ENCODE measurements at regions of chr3 and their contacts with region 1.

Region 1: DNA sequence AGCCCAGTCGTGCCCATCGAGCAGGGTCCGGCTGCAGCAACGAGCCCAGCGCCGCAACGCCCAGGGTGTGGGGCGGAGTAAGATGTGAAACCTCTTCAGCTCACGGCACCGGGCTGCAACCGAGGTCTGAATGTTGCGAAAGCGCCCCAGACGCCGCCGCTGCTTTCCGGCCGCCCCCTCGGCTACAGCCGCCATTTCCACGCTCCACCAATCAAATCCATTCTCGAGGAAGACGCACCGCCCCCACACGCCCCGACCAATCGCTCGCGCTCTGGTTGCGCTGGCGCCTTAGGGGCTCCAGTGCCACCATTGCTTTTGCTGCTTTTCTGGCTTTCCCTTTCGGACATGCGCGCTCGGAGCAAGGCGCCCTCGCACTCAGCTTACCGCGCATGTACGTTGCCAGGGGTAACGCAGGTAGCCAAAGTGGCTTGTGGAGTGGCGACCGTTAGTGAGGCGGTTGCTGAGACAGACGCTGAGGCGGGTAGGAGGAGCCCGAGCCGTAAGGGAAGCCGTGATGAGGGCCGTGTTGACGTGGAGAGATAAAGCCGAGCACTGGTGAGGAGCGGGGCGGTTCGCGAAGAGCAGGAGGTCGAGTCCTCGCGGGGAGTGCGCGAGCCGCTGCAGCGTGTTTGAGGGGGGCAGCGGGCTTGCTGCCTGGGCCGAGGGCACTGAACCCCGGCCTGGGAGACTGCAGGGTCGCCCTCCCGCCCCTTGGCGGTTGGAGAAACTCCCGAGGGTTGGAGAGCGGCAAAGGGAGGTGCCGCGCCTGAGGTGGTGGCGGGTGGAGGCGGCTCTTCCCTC is at the starts of genes IFT122 and MBD4:
- DNase-seq: peak; percentile 100
- H3K4me3 Mint-ChIP-seq: peak within 1 kb of the TSS; percentile 92
- H3K27ac Mint-ChIP-seq: peak within 1 kb of the TSS; percentile 99
- H3K4me1 Mint-ChIP-seq: peaks cover 54% of the 10 kb centered on the region
- H3K27me3 Mint-ChIP-seq: no peaks in the 10 kb centered on the region
- total RNA-seq, gene IFT122: 15.7 and 17.6 TPM in 2 replicates
- total RNA-seq, gene MBD4: 41.9 and 45.9 TPM in 2 replicates

Region 2: GRCh38 chr3:129183569-129184395 is 256.2 kb before region 1 on chr3 and contains the start of gene CNBP:
- intact Hi-C with region 1: loop called (anchors 5 kb)
- DNase-seq: peak; percentile 91
- H3K4me3 Mint-ChIP-seq: peak within 1 kb of the TSS; percentile 97
- H3K27ac Mint-ChIP-seq: peak within 1 kb of the TSS; percentile 98
- H3K4me1 Mint-ChIP-seq: peaks cover 42% of the 10 kb centered on the region
- H3K27me3 Mint-ChIP-seq: no peaks in the 10 kb centered on the region
- total RNA-seq, gene CNBP: 351 TPM in 2 replicates

Region 3: DNA sequence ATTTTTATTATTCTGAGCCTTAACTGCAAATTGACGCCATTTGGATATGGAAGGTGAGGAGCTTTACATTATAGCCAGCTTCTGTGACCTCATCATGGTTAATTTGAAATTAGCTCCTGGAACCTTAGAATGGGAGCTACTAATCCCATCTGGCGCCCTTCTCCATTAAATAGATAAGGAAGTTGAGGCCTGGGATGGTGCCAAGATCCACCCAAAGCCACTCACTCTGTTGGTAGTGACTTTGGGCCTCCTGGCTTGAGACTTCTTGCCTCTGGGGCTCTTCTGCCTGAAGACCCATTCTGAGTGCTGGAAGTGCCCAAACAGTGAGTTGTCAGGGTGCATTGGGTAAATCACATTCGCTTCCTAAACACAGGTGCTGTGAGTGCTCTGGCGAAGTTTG is 173.4 kb before region 1 on chr3:
- intact Hi-C with region 1: no loop called
- DNase-seq: no peak
- H3K4me3 Mint-ChIP-seq: no peak overlapping the region
- H3K27ac Mint-ChIP-seq: no peak overlapping the region
- H3K4me1 Mint-ChIP-seq: no peaks in the 10 kb centered on the region
- H3K27me3 Mint-ChIP-seq: no peaks in the 10 kb centered on the region

Region 4: DNA sequence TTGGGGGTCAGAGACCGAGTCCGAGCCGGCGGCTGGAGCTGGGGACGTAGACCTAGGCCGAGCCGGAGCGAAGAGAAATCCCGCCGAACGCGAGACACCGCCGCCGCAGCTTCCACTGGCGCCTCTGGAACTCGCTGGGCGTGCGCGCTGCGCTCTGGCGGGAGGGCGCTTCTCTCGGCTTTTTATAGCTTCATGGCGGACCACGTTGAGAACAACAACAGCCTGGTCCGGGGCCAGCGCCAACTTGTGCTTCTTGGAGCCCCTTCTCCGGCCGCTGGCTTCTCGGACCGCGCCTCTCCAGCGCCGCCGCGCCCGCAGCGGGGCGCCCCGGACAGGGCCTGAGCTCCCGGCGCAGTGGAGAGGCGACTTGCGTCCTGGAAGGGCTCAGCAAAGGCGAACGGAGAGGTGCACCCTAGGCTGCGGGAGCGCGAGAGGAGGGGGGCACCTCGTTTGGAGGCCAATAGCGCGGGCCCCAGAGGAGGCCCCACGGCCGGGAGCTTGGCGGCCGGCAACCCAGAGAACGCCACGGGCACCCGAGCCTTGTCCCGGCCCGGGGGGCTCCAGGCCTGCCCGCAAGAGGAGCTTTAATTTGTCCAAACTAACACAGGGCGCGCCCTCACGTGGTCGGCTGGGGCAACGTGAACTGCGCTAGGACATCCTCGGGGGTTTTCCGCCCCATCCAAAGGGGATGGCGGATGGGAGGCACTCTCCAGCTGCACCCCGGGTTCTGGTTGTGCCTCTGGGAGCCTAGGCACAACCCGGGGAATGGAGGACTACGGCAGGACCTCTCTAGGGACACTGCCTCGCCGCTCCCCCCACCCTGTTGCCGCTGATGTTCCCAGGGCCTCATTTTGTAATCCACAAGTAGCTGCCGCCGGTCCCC is 123.6 kb before region 1 on chr3:
- intact Hi-C with region 1: loop called (anchors 1 kb)
- DNase-seq: peak; percentile 89
- H3K4me3 Mint-ChIP-seq: peak overlapping the region; percentile 71
- H3K27ac Mint-ChIP-seq: peak overlapping the region; percentile 53
- H3K4me1 Mint-ChIP-seq: peaks cover 16% of the 10 kb centered on the region
- H3K27me3 Mint-ChIP-seq: no peaks in the 10 kb centered on the region

Region 5: DNA sequence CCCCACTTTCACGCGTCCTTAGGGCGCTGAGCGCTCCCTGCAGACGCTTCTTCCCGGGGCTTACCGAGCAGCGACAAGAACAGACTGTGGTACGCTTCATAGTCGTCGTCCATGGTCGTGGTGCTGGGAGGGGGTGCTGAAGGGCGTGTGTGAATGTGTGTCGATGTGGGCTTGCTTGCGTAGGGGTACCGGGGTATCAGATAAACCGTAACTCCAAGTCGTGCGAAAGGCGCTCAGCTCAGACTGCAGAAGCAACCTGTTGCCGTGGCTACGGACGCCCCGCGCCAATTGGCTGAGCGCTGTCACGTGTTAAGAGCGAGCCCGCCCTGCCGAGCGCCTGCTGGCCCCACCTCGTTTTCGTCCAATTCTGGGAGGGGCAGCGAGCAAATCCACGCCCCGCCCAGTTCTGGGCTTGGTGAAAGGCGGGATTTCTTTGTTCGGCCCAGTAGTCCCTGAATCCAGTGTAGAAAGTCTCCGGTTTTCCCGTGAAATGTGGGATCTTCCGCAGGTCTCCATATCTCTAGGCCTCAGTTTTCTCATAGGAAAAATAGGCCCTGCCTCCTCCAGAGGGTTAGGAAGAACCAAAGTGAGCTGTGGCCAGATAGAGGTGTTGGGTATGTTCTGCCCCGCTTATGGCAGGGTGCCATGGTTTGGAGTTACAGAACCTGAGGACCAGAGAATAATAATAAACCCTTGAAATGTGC is 11.5 kb before region 1 on chr3 and contains the start of gene EFCAB12:
- intact Hi-C with region 1: loop called (anchors 1 kb)
- DNase-seq: peak; percentile 87
- H3K4me3 Mint-ChIP-seq: peak within 1 kb of the TSS; percentile 62
- H3K27ac Mint-ChIP-seq: peak within 1 kb of the TSS; percentile 64
- H3K4me1 Mint-ChIP-seq: peaks cover 24% of the 10 kb centered on the region
- H3K27me3 Mint-ChIP-seq: peaks cover 8% of the 10 kb centered on the region
- total RNA-seq, gene EFCAB12: 0.25 and 0.48 TPM in 2 replicates

Region 6: DNA sequence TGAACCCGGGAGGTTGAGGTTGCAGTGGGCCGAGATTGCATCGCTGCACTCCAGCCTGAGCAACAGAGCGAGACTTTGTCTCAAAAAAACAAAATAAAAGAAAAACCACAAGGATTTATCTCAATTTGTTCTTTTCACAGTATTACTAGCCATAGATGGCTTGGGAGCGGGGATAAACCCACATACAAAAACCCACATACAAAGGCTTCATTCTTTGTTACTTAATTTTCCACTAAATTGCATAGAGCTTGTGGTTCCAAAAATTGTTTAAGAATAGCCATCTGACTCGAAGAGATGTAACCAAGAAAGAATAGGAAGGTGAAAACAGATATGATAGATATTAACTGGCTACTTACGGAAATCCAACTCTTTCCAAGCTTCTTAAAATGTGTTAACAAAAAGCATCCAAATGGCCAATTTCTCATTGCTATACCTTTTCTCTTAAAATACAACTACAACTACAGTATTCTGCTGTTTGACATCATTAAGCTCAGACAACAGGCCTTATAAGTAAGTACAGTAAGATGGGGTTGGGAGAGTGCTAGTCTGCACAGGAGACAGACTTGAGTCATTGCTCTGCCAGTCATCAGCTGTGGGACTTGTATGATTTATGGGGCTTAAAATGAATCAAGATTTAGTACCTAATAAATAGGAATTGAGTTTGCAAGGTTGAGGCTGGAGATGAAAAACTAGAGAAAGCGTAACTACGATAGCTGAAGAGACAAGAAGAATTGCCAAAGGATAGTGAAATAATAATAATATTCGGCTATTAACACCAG is 263.1 kb after region 1 on chr3:
- intact Hi-C with region 1: no loop called
- DNase-seq: no peak
- H3K4me3 Mint-ChIP-seq: no peak overlapping the region
- H3K27ac Mint-ChIP-seq: no peak overlapping the region
- H3K4me1 Mint-ChIP-seq: peaks cover 9% of the 10 kb centered on the region
- H3K27me3 Mint-ChIP-seq: no peaks in the 10 kb centered on the region

Region 7: GRCh38 chr3:129893581-129894070 is 453.6 kb after region 1 on chr3 and contains the start of gene TMCC1:
- intact Hi-C with region 1: loop called (anchors 1 kb)
- DNase-seq: peak; percentile 83
- H3K4me3 Mint-ChIP-seq: peak within 1 kb of the TSS; percentile 88
- H3K27ac Mint-ChIP-seq: peak within 1 kb of the TSS; percentile 85
- H3K4me1 Mint-ChIP-seq: peaks cover 35% of the 10 kb centered on the region
- H3K27me3 Mint-ChIP-seq: no peaks in the 10 kb centered on the region
- total RNA-seq, gene TMCC1: 18.0 and 21.3 TPM in 2 replicates

Measured in activated T-helper 2 cell treated with anti-CD3 and anti-CD28 coated beads, Interferon-gamma antibody, Interleukin-2, Interleukin-4, amounts not matched to agents 10 μg/mL and 5 μg/mL and 100 μg/mL, durations not matched to agents 14 hours and 24 hours and 36 hours (primary cell).